Thyroid gland (tissue), 4 donors: ENCODE measurements at regions of chr1 and their contacts with region 1.

Region 1: GRCh38 chr1:44739361-44740178 is at the start of gene KIF2C:
- DNase-seq: peak; percentile 97 to 98
- H3K4me3 ChIP-seq: peak within 1 kb of the TSS in 2 of 3 donors; percentile 5 to 36
- H3K27ac ChIP-seq: peak within 1 kb of the TSS; percentile 62 to 95 (median 76)
- H3K4me1 ChIP-seq: peaks cover 4 to 5% of the 10 kb centered on the region in 2 donors
- H3K27me3 ChIP-seq: no peaks in the 10 kb centered on the region
- CTCF ChIP-seq: peak in 1 of 6 experiments; percentile 15
- POLR2A ChIP-seq: peak; percentile 21 to 92
- total RNA-seq, gene KIF2C: 0.63 to 1.2 (median 1.0) TPM

Region 2: DNA sequence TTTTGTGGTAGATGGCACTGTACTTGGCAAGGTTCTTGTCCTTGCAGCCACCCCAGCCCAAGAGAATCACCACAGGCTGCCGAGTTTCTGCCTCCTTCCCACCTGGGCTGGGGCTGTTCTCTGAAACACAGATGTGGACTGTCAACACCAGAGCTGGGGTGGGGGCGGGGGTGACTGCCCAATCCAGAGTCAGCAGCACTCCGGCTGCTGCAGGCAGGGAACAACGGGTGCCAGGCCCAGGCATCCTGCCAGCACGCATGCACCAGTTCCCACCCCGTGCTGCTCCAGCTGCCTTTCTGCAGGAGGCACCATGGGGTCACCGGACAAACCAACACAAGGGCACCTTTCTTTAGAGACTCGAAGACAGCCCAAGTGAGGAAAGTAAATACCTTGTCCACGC is 79.4 kb before region 1 on chr1:
- intact Hi-C with region 1: no loop called
- DNase-seq: peak; percentile 95 to 96
- H3K4me3 ChIP-seq: no peak overlapping the region
- H3K27ac ChIP-seq: no peak overlapping the region
- H3K4me1 ChIP-seq: peaks cover 0 to 13% of the 10 kb centered on the region in 2 donors
- H3K27me3 ChIP-seq: no peaks in the 10 kb centered on the region
- CTCF ChIP-seq: no peak
- POLR2A ChIP-seq: no peak

Region 3: DNA sequence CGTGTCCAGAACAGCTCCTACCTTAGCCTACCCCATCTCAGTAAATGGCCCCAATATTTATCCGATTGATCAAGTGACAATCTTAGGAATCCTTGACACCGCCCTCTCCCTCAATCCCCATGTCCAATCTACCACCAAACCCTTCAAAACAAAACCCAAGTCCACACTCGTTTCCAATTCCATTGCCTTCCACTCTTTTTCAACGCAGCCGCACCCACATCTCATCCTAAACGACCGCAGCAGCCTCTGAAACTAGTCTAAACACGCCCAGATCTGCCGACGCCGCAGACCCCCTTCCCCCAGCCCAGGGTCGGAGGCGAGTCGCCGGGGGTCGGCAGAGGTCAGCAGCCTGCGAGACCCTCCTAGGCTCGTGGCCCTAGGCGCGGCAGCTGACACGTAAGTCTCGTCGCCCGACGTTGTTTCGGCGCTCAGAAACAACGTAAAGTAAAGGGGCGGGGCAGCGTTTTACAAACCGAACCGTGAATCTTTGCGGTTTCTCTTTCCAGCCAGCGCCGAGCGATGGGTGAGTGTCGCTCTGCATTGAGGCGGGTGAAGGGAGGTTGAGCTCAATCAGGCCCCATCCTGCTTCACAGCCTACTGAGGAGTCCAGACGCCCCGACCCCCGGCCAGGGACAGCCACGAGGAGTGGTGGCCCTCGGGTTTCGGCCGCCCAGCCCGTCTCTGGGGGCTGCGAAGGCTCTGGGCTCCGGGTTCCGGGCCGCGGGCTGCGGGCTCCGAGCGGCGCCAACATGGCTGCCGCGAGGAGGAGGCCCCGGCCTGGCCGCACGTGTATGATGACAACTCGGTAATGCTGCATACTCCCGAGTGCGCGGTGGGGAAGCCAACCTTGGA is 35.7 kb after region 1 on chr1 and contains the start of gene RPS8:
- intact Hi-C with region 1: loop called (anchors 5 kb)
- DNase-seq: peak; percentile 91 to 92
- H3K4me3 ChIP-seq: peak within 1 kb of the TSS; percentile 57 to 96 (median 71)
- H3K27ac ChIP-seq: peak within 1 kb of the TSS; percentile 88 to 90 (median 89)
- H3K4me1 ChIP-seq: peaks cover 12 to 14% of the 10 kb centered on the region in 2 donors
- H3K27me3 ChIP-seq: no peaks in the 10 kb centered on the region
- CTCF ChIP-seq: peak in 1 of 6 experiments; percentile 3
- POLR2A ChIP-seq: peak; percentile 33 to 94
- total RNA-seq, gene RPS8: 1,167 to 2,709 (median 1,595) TPM